Adrenal gland (tissue), 19 donors: ENCODE measurements at regions of chr12 and their contacts with region 1.

Region 1: DNA sequence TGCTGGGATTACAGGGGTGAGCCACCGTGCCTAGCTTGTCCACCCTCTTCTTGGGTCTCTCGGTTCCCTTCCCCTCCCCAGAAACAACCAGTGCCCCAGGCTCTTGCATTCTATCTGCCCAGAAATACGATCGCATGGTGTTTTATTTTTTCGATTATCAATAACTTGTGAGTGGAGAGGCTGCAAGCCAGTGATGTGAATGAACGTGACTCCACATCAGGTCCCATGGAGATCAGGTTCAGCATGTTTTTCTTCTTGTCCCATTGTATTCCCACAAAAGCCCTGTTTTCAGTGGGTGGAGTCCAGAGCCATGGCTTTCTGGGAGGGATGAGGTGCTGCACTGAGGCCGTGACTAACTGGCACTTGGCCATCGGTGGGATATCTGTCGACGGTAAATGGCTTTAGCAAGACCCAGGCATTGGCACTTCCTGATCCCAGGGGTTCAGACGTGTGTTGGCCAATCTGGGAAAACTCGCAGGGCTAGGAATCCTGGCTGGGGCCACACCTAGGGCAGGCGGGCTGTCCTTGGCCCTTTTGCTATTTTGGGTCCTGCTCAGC is 12.7 kb upstream of the HNF1A start:
- DNase-seq: no peak
- H3K4me3 ChIP-seq: no peak overlapping the region
- H3K27ac ChIP-seq: no peak overlapping the region
- H3K4me1 ChIP-seq: no peaks in the 10 kb centered on the region
- H3K27me3 ChIP-seq: no peaks in the 10 kb centered on the region
- CTCF ChIP-seq: no peak
- POLR2A ChIP-seq: no peak

Region 2: DNA sequence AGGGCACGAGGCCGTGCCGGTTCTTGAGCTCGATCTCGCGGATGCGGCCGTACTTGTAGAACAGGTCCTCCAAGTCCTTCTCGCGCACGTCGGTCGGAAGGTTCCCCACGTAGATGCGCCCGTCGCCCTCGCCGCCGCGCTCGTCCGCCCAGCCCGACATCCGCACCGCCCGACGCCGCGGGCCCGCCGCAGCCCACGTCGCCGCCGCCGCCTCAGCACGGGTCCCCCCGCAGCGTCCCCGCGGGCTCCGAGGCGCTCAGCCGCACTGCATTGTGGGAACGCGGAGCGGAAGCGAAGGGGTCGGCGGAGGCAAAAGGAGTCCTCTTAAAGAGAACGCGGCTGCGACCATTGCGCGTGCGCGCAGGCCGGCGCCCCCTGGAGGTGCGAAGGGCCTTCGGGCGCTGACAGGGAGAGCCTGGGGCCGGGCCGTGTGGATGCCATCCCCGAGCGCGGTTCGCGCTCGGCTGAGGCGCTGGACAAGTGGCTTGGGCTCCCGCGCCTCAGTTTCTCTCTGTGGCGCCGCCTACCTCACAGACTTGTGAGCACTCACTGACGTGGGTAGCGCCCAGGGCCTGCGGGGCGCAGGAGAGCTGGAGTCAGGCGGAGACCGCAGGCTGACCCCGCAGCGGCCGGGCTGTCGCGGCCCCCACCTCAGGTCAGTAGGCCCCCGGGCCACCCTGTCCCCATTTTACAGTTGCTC is 496.0 kb before region 1 on chr12 and contains the start of gene SRSF9:
- intact Hi-C with region 1: no loop called
- DNase-seq: peak; percentile 95 to 97 (median 95)
- H3K4me3 ChIP-seq: peak within 1 kb of the TSS; percentile 67 to 87 (median 85)
- H3K27ac ChIP-seq: peak within 1 kb of the TSS; percentile 70 to 97 (median 93)
- H3K4me1 ChIP-seq: peaks cover 6 to 41% of the 10 kb centered on the region in 2 donors
- H3K27me3 ChIP-seq: no peaks in the 10 kb centered on the region
- CTCF ChIP-seq: peak; percentile 53 to 88 (median 78)
- POLR2A ChIP-seq: peak; percentile 77 to 82
- total RNA-seq, gene SRSF9: 55.5 to 206 (median 179) TPM

Region 3: GRCh38 chr12:120590741-120591407 is 374.7 kb before region 1 on chr12:
- intact Hi-C with region 1: loop called (anchors 5 to 10 kb)
- DNase-seq: no peak
- H3K4me3 ChIP-seq: no peak overlapping the region
- H3K27ac ChIP-seq: no peak overlapping the region
- H3K4me1 ChIP-seq: no peaks in the 10 kb centered on the region
- H3K27me3 ChIP-seq: no peaks in the 10 kb centered on the region
- CTCF ChIP-seq: no peak
- POLR2A ChIP-seq: no peak